ENCODE measurements at regions of chr21 and their contacts with region 1.

Region 1: GRCh38 chr21:43718872-43719747 is at the start of gene PDXK:
- DNase-seq: peak; percentile 82
- H3K4me3 Mint-ChIP-seq: peak within 1 kb of the TSS; percentile 86
- H3K27ac Mint-ChIP-seq: peak within 1 kb of the TSS; percentile 79
- H3K4me1 Mint-ChIP-seq: peaks cover 17% of the 10 kb centered on the region
- H3K27me3 Mint-ChIP-seq: peaks cover 25% of the 10 kb centered on the region
- total RNA-seq, gene PDXK: 123 and 135 TPM in 2 replicates

Region 2: GRCh38 chr21:43775795-43776430 is 56.8 kb after region 1 on chr21 and contains the start of gene CSTB:
- intact Hi-C with region 1: loop called (anchors 2 kb)
- DNase-seq: peak; percentile 83
- H3K4me3 Mint-ChIP-seq: peak within 1 kb of the TSS; percentile 96
- H3K27ac Mint-ChIP-seq: peak within 1 kb of the TSS; percentile 80
- H3K4me1 Mint-ChIP-seq: peaks cover 43% of the 10 kb centered on the region
- H3K27me3 Mint-ChIP-seq: no peaks in the 10 kb centered on the region
- total RNA-seq, gene CSTB: 51.9 and 52.4 TPM in 2 replicates